ENCODE measurements at regions of chr20 and their contacts with region 1.

Region 1: DNA sequence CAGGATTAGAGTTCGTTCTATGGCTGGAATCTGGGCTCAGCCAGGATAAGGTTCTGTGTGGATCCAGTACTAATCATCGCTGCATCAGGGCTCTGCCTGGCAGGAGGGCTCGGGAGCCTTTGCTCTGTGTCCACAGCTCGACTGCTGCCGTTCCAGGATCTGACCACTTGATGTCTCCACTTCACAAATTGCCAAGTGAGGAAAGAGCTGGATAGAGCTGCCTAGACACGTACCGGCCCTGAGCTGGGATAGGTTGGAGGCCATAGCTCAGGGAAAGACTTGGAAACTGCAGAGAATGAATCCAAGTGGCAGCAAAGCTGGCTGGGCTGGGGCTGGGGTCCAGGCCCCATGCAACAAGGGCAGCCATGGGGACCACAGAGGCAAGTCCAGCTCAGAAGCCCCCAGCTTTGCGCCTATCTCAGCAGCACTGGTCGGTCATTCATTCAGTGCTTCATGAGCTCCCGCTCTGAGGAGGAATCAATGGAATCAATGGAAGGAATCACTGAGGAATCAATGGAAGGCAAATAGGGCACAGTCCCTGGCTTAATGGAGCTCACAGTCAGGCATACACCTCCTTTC is 38.0 kb upstream of the TOP1 start:
- DNase-seq: peak; percentile 75 to 83 (median 80)
- ATAC-seq: peak; percentile 96 to 99 (median 98)
- H3K4me3 ChIP-seq: no peak overlapping the region
- H3K27ac ChIP-seq: peak overlapping the region in 1 of 12 donors; percentile 68
- H3K4me1 ChIP-seq: peaks cover 0 to 21% (median 0%) of the 10 kb centered on the region in 12 donors
- H3K27me3 ChIP-seq: no peaks in the 10 kb centered on the region
- CTCF ChIP-seq: peak; percentile 63 to 89 (median 81)
- POLR2A ChIP-seq: no peak

Region 2: DNA sequence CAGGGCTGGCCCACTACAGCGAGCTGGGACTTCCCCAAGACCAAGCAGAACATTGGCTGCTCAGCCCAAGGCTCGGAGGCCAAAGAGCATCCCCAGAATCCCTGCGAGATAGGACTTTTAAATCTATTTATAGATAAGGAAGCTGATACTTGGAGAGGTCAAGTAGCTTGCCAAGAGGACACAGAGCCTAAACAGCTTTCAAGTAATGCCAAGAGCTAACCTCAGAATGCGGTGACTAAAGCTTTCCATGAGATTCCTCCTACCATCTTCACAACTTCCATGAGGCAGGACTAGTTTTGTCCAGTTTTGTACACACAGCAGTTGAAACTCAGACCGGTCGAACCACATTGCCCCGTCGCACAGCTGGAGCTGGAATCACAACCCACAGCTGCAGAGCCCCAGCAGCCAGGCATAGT is 130.1 kb before region 1 on chr20:
- intact Hi-C with region 1: no loop called
- DNase-seq: no peak
- ATAC-seq: no peak
- H3K4me3 ChIP-seq: no peak overlapping the region
- H3K27ac ChIP-seq: no peak overlapping the region
- H3K4me1 ChIP-seq: peaks cover 0 to 15% (median 7%) of the 10 kb centered on the region in 12 donors
- H3K27me3 ChIP-seq: peaks cover 0 to 10% (median 0%) of the 10 kb centered on the region in 9 donors
- CTCF ChIP-seq: no peak
- POLR2A ChIP-seq: no peak

Region 3: DNA sequence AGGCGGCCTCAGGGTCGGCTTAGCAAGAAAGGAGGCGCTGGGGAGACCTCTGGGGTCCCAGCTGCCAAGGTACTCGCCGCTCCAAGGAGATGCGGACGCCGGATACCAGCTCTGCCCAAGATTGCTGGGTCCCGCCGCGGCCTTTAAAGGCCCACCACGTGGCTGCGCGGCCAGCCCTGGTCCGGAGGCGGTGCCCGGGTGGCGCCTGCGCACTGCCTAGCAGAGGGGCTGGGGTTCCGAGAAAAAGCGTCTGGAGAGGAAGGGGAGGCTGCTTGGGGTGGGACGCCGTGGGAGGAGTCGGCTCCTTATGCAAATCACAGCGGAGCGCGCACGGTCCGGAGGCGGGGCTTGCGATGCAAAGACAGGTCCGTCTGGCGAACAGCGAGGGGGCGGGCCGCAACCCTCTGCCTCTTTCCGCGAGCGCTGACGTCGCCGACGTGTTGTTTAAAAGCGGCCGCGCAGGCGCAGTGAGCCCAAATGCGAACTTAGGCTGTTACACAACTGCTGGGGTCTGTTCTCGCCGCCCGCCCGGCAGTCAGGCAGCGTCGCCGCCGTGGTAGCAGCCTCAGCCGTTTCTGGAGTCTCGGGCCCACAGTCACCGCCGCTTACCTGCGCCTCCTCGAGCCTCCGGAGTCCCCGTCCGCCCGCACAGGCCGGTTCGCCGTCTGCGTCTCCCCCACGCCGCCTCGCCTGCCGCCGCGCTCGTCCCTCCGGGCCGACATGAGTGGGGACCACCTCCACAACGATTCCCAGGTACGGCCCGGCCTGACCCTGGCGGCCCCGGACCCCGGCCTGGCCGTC is 37.9 kb after region 1 on chr20 and contains the start of gene TOP1:
- intact Hi-C with region 1: loop called in 2 of 10 experiments (anchors 2 to 5 kb)
- DNase-seq: peak; percentile 100
- ATAC-seq: peak; percentile 98 to 99 (median 98)
- H3K4me3 ChIP-seq: peak within 1 kb of the TSS; percentile 66 to 99 (median 94)
- H3K27ac ChIP-seq: peak within 1 kb of the TSS; percentile 89 to 99 (median 94)
- H3K4me1 ChIP-seq: peaks cover 4 to 46% (median 38%) of the 10 kb centered on the region in 12 donors
- H3K27me3 ChIP-seq: no peaks in the 10 kb centered on the region
- CTCF ChIP-seq: peak in 1 of 12 donors; percentile 24
- POLR2A ChIP-seq: peak; percentile 94 to 99
- total RNA-seq, gene TOP1: 15.0 to 32.3 (median 21.8) TPM

Region 4: GRCh38 chr20:41038878-41039404 is 48.3 kb after region 1 on chr20:
- intact Hi-C with region 1: no loop called
- DNase-seq: no peak
- ATAC-seq: no peak
- H3K4me3 ChIP-seq: no peak overlapping the region
- H3K27ac ChIP-seq: no peak overlapping the region
- H3K4me1 ChIP-seq: peaks cover 5 to 70% (median 21%) of the 10 kb centered on the region in 12 donors
- H3K27me3 ChIP-seq: no peaks in the 10 kb centered on the region
- CTCF ChIP-seq: no peak
- POLR2A ChIP-seq: no peak

Region 5: GRCh38 chr20:41078329-41078728 is 87.7 kb after region 1 on chr20:
- intact Hi-C with region 1: loop called in 8 of 10 experiments (anchors 5 kb)
- DNase-seq: peak in 1 of 5 donors; percentile 13
- ATAC-seq: peak in 3 of 4 donors; percentile 69 to 88 (median 72)
- H3K4me3 ChIP-seq: peak overlapping the region in 2 of 12 donors; percentile 7 to 8
- H3K27ac ChIP-seq: peak overlapping the region in 6 of 12 donors; percentile 8 to 56 (median 36)
- H3K4me1 ChIP-seq: peaks cover 0 to 56% (median 35%) of the 10 kb centered on the region in 12 donors
- H3K27me3 ChIP-seq: no peaks in the 10 kb centered on the region
- CTCF ChIP-seq: peak; percentile 36 to 73 (median 53)
- POLR2A ChIP-seq: no peak

Region 6: DNA sequence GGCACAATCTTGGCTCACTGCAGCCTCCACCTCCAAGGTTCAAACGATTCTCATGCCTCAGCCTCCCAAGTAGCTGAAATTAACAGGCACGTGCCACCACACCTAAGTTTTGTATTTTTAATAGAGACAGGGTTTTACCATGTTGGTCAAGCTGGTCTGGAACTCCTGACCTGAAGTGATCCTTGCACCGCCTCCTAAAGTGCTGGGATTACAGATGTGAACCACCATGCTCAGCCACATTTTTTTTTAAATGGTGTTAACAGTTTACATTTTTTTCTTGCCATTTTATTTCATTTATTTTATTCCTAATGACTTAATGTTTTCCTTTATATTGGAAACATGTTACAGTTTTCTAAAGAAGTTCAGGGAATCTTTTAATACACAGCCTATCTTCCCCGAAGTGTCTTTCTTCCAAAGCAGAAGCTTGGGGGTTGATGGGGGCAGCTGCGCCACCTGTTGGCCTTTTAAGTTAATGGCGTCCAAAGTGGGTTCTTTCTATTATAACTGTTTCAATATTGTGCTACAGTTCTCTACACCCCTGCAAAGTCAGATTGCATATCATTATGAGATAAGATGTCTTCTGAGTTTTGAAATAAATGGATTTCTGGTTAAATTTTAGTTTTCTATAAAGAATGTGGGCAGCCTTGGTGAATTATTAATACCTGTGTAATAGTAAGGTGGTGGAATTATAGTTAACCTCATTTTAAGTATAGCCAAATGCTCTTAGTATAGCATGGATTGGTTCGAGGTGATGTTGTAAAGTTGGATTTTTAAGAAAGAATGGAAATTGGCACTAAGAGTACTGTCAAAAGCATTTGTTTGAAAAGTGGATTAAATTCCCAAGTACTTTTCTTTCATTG is 104.7 kb after region 1 on chr20:
- intact Hi-C with region 1: loop called (anchors 1 to 5 kb)
- DNase-seq: peak; percentile 38 to 72 (median 54)
- ATAC-seq: peak in 3 of 4 donors; percentile 34 to 77 (median 71)
- H3K4me3 ChIP-seq: no peak overlapping the region
- H3K27ac ChIP-seq: no peak overlapping the region
- H3K4me1 ChIP-seq: peaks cover 0 to 12% (median 0%) of the 10 kb centered on the region in 12 donors
- H3K27me3 ChIP-seq: no peaks in the 10 kb centered on the region
- CTCF ChIP-seq: peak; percentile 83 to 94 (median 86)
- POLR2A ChIP-seq: no peak